GM12878 (cell line): ENCODE measurements at regions of chr14 and their contacts with region 1.

Region 1: GRCh38 chr14:25400607-25401206 is 350.8 kb upstream of the STXBP6 start:
- DNase-seq: no peak
- ATAC-seq: peak; percentile 79
- H3K4me3 ChIP-seq: no peak overlapping the region
- H3K27ac ChIP-seq: no peak overlapping the region
- H3K4me1 ChIP-seq: no peaks in the 10 kb centered on the region
- H3K27me3 ChIP-seq: no peaks in the 10 kb centered on the region
- CTCF ChIP-seq: peak; percentile 57 to 66 (median 65)
- EP300 ChIP-seq: no peak
- POLR2A ChIP-seq: no peak
- RAD21 ChIP-seq: peak; percentile 38

Region 2: GRCh38 chr14:25381464-25381863 is 19.2 kb before region 1 on chr14:
- CTCF ChIA-PET with region 1: interaction called, 50 read pairs
- POLR2A ChIA-PET with region 1: no interaction called
- RAD21 ChIA-PET with region 1: interaction called, 3 read pairs
- SMC1A ChIA-PET with region 1: interaction called, 10 read pairs
- in situ Hi-C with region 1: no loop called
- intact Hi-C with region 1: no loop called
- DNase-seq: no peak
- ATAC-seq: peak; percentile 54; the same call in 1 of the 3 replicates
- H3K4me3 ChIP-seq: no peak overlapping the region
- H3K27ac ChIP-seq: no peak overlapping the region
- H3K4me1 ChIP-seq: no peaks in the 10 kb centered on the region
- H3K27me3 ChIP-seq: no peaks in the 10 kb centered on the region
- CTCF ChIP-seq: peak; percentile 5 to 18 (median 15); a peak in 1 of 6 replicates
- EP300 ChIP-seq: no peak
- POLR2A ChIP-seq: no peak
- RAD21 ChIP-seq: no peak

Region 3: GRCh38 chr14:25411781-25412757 is 11.4 kb after region 1 on chr14:
- CTCF ChIA-PET with region 1: interaction called, 38 read pairs
- POLR2A ChIA-PET with region 1: no interaction called
- RAD21 ChIA-PET with region 1: interaction called, 3 read pairs
- SMC1A ChIA-PET with region 1: interaction called, 6 read pairs
- in situ Hi-C with region 1: no loop called
- intact Hi-C with region 1: no loop called
- DNase-seq: no peak
- ATAC-seq: no peak
- H3K4me3 ChIP-seq: no peak overlapping the region
- H3K27ac ChIP-seq: no peak overlapping the region
- H3K4me1 ChIP-seq: no peaks in the 10 kb centered on the region
- H3K27me3 ChIP-seq: no peaks in the 10 kb centered on the region
- CTCF ChIP-seq: peak in 1 of 3 experiments; percentile 2; a peak in 1 of 6 replicates
- EP300 ChIP-seq: no peak
- POLR2A ChIP-seq: no peak
- RAD21 ChIP-seq: no peak